Mammary epithelial cell (primary cell): ENCODE measurements at regions of chr3 and their contacts with region 1.

Region 1: DNA sequence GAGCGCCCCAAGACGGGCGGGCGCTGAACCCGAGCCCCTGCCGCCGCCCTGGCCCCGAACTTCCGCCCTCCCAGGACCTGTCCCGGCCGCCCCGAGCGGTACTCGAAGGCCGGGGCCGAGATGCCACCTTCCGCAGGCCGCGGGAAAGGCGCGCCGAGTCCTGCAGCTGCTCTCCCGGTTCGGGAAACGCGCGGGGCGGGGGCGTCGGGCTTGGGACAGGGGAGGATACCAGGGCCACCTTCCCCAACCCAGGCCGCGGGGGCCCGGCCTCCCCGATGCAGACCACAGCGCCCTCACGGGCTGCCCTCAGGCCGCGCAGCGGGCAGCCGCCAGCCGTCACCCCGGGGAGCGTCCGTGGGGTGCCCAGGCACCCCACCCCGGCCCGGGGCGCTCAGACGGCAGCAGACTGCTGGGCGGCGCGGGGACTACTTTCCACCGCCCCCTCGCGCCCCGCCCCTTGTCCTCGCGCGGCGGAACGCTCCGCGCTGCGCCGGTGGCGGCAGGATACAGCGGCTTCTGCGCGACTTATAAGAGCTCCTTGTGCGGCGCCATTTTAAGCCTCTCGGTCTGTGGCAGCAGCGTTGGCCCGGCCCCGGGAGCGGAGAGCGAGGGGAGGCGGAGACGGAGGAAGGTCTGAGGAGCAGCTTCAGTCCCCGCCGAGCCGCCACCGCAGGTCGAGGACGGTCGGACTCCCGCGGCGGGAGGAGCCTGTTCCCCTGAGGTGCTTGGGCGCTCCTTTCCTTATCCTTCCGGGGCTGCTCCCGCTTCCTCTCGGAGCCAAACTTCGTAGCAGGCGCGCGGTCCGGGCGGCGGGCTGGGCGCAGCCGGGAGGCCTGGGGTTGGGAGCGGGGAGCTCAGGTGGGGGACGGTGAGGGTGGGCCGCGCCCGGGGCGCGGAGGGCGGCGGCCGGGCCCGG is at the start of gene CTNNB1:
- DNase-seq: peak; percentile 93
- H3K4me3 ChIP-seq: peak within 1 kb of the TSS; percentile 97 to 100 (median 100)
- H3K27ac ChIP-seq: peak within 1 kb of the TSS; percentile 89
- H3K4me1 ChIP-seq: peaks cover 8% of the 10 kb centered on the region
- H3K27me3 ChIP-seq: no peaks in the 10 kb centered on the region
- CTCF ChIP-seq: peak in 1 of 2 donors; percentile 16
- total RNA-seq, gene CTNNB1: 543 to 1,542 TPM

Region 2: GRCh38 chr3:40719660-40720287 is 479.4 kb before region 1 on chr3:
- CTCF ChIA-PET with region 1: no interaction called
- dilution Hi-C with region 1: no loop called
- in situ Hi-C with region 1: no loop called
- intact Hi-C with region 1: loop called (anchors 1 kb)
- DNase-seq: peak; percentile 55
- H3K4me3 ChIP-seq: no peak overlapping the region
- H3K27ac ChIP-seq: no peak overlapping the region
- H3K4me1 ChIP-seq: peaks cover 15% of the 10 kb centered on the region
- H3K27me3 ChIP-seq: no peaks in the 10 kb centered on the region
- CTCF ChIP-seq: peak; percentile 24 to 75

Region 3: DNA sequence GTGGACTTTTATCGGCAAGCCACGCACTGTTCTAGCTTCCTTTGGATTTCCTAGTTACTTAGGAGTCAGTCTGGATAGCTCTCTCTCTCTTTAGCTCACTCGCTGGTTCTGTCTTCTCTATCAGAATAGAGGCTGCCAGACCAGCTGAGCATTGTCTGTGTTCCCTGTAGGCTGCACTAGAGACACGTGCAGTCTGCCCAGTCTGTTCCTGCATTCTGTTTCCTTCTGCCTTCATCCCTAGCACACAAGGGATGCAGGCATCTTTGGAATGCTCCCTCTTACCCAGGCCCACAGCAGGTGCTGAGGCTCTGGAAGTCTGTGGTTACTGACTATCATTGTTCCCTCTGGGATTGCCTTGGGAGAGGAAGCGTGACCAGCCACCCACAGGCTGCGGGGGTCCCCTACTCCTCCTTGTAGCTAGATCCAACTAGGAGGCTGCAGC is 351.6 kb before region 1 on chr3:
- CTCF ChIA-PET with region 1: no interaction called
- dilution Hi-C with region 1: no loop called
- in situ Hi-C with region 1: no loop called
- intact Hi-C with region 1: loop called (anchors 5 kb)
- DNase-seq: peak; percentile 12
- H3K4me3 ChIP-seq: no peak overlapping the region
- H3K27ac ChIP-seq: no peak overlapping the region
- H3K4me1 ChIP-seq: peaks cover 11% of the 10 kb centered on the region
- H3K27me3 ChIP-seq: no peaks in the 10 kb centered on the region
- CTCF ChIP-seq: peak; percentile 12 to 25

Region 4: GRCh38 chr3:41102053-41102556 is 97.1 kb before region 1 on chr3:
- CTCF ChIA-PET with region 1: no interaction called
- dilution Hi-C with region 1: no loop called
- in situ Hi-C with region 1: no loop called
- intact Hi-C with region 1: loop called (anchors 1 kb)
- DNase-seq: peak; percentile 89
- H3K4me3 ChIP-seq: no peak overlapping the region
- H3K27ac ChIP-seq: peak overlapping the region; percentile 3
- H3K4me1 ChIP-seq: peaks cover 16% of the 10 kb centered on the region
- H3K27me3 ChIP-seq: no peaks in the 10 kb centered on the region
- CTCF ChIP-seq: no peak

Region 5: DNA sequence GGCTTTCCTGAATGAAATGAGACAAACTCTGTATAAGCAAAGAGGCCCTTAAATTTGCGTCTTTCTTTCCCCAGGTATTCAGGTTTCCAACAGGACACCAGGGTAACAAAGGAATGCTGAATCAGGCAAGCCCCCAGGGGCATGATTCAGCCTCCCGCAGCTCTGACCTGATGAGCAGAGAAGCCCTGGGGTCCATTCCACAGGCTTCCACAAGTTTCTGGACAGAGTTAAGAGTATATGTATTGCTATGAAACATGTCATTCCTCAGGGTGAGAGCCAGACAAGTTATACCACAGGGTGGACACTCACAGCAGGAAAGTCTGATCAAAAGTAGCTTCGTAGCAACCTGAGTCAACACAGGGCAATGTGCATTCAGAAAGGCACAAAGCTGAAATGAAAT is 68.0 kb before region 1 on chr3:
- CTCF ChIA-PET with region 1: no interaction called
- dilution Hi-C with region 1: loop called (anchors 5 kb)
- in situ Hi-C with region 1: no loop called
- intact Hi-C with region 1: loop called (anchors 1 kb)
- DNase-seq: peak; percentile 99
- H3K4me3 ChIP-seq: no peak overlapping the region
- H3K27ac ChIP-seq: peak overlapping the region; percentile 89
- H3K4me1 ChIP-seq: peaks cover 17% of the 10 kb centered on the region
- H3K27me3 ChIP-seq: no peaks in the 10 kb centered on the region
- CTCF ChIP-seq: peak in 1 of 2 donors; percentile 16

Region 6: GRCh38 chr3:41158947-41159346 is 40.3 kb before region 1 on chr3:
- CTCF ChIA-PET with region 1: no interaction called
- dilution Hi-C with region 1: no loop called
- in situ Hi-C with region 1: no loop called
- intact Hi-C with region 1: loop called (anchors 2 kb)
- DNase-seq: peak; percentile 99
- H3K4me3 ChIP-seq: no peak overlapping the region
- H3K27ac ChIP-seq: peak overlapping the region; percentile 79
- H3K4me1 ChIP-seq: peaks cover 21% of the 10 kb centered on the region
- H3K27me3 ChIP-seq: no peaks in the 10 kb centered on the region
- CTCF ChIP-seq: no peak

Region 7: GRCh38 chr3:41267975-41268663 is 68.9 kb after region 1 on chr3:
- CTCF ChIA-PET with region 1: no interaction called
- dilution Hi-C with region 1: no loop called
- in situ Hi-C with region 1: no loop called
- intact Hi-C with region 1: no loop called
- DNase-seq: peak; percentile 95
- H3K4me3 ChIP-seq: no peak overlapping the region
- H3K27ac ChIP-seq: no peak overlapping the region
- H3K4me1 ChIP-seq: peaks cover 11% of the 10 kb centered on the region
- H3K27me3 ChIP-seq: no peaks in the 10 kb centered on the region
- CTCF ChIP-seq: no peak

Region 8: DNA sequence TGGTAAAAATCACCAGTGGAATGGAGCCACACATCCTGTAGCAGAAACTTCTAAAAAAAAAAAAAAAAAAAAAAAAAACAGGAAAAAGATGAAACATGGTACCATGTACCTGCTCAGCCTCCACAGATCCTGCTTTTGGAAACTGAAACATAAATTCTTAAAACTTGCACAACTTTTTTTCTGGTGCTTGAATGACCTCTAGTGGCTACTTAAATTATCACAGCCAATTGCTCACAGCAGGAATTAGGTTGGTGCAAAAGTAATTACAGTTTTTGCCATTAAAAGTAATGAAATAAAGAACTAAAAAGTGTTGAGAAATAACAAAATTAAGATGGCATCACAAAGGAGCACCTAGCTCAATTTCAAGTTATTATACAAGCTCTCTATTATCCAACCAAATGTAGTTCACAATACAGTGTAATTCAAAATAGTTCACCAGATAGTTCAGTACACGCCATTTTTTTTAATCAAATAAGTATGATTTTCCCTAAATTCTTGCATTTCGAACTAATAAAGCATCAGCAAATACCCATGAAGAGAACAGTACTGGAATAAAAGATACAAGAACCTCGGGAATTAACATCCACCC is 682.1 kb after region 1 on chr3:
- CTCF ChIA-PET with region 1: interaction called, 3 read pairs
- dilution Hi-C with region 1: no loop called
- in situ Hi-C with region 1: no loop called
- intact Hi-C with region 1: loop called (anchors 2 kb)
- DNase-seq: peak; percentile 29
- H3K4me3 ChIP-seq: no peak overlapping the region
- H3K27ac ChIP-seq: no peak overlapping the region
- H3K4me1 ChIP-seq: no peaks in the 10 kb centered on the region
- H3K27me3 ChIP-seq: no peaks in the 10 kb centered on the region
- CTCF ChIP-seq: peak; percentile 54 to 55